ENCODE measurements at regions of chr11 and their contacts with region 1.

Region 1: DNA sequence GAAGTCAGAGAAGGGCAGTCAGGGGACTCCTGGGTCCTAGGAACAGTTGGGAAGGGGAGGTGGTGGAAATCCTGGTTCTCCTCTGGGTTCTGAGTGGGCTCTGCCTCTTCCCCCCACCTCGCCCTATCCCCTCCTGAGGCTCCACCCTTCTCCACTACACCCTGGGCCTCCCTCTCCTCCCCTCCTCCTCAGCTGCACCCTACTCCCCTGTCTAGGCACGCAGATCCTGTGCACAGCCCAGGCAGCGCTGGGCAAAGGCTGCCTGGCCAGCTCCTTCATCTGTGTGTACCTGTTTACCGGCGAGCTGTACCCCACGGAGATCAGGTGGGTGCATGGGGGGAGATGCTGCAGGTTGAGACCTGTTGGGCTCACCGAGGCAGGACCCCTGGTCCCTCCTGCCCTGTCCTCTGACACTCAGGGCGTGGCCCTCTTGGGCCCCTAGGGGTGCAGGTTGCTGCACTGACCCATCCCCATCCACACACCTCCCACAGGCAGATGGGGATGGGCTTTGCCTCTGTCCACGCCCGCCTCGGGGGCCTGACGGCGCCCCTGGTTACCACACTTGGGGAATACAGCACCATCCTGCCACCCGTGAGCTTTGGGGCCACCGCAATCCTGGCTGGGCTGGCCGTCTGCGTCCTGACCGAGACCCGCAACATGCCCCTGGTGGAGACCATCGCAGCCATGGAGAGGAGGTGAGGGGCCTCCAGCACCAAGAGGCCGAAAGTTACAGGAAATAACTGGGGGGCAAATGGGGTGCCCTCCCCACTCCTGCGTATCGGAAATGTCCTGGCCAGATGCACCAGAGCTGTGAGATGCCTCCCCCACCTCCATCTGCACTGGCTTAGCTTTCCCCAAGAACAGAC is 25.3 kb upstream of the POLA2 start:
- DNase-seq: no peak
- ATAC-seq: peak in 2 of 8 donors; percentile 39 to 55
- H3K4me3 ChIP-seq: no peak overlapping the region
- H3K27ac ChIP-seq: no peak overlapping the region
- H3K4me1 ChIP-seq: no peaks in the 10 kb centered on the region
- H3K27me3 ChIP-seq: peaks cover 0 to 1% (median 0%) of the 10 kb centered on the region in 7 donors
- CTCF ChIP-seq: no peak

Region 2: DNA sequence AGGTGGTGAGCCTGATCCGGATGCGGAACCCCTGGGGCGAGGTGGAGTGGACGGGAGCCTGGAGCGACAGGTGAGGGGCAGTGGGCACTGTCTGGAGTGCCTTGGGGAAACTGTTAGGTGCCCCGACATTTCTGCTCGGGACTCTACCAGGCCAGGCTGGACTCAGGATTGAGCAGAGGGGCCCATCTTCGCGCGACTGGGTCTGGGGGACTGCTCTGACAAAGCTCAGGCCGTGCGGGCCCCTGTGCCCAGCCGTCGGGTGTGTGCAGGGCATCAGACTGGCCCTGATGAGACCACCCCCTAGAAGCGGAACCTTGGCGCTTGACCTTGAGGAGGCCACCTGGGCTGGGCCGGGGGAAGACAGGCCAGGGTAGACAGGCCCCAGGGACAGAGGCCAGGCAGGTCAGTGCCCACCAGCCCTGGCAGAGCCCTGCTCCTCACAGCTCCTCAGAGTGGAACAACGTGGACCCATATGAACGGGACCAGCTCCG is 48.4 kb before region 1 on chr11:
- intact Hi-C with region 1: loop called in 1 of 10 experiments (anchors 2 kb)
- DNase-seq: no peak
- ATAC-seq: peak in 3 of 8 donors; percentile 8 to 27 (median 25)
- H3K4me3 ChIP-seq: no peak overlapping the region
- H3K27ac ChIP-seq: no peak overlapping the region
- H3K4me1 ChIP-seq: peaks cover 0 to 7% (median 4%) of the 10 kb centered on the region in 9 donors
- H3K27me3 ChIP-seq: no peaks in the 10 kb centered on the region
- CTCF ChIP-seq: no peak

Region 3: DNA sequence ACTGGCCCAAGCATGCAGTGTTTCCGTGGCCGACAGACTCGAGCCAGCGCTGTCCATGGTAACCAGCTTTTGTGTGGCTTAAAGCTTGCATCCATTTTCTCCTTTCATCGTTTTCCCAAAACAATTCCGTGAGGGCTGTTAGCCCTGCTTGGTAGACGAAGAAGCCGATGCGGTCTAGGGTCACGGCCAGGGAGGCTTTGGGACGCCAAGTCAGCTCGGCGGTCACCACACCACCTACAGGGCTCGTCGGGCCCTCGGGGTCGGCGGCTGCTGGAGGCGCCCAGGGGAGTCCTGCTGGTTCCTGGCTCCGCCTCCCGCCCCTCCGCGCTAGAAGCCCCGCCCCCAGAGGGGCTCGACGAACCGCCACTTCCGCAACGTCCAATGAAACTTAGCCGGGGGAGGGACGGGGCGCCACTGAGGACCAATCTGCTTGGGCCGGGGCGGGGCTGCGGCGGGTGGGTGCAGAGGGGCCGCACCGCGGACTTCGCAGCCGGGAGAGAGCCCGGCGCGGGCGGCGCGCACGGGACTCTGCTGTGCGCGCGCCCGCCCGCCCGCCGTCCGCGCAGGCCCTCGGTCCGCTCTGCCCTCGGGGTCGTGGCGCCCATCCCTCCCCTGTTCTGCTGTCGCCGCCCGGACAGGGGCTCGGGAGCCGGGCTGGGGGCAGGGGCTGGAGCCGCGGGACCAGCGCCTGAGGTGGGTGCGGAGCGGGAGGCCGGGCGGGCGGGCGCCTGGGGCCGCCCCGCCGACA is 118.0 kb after region 1 on chr11 and contains the start of gene TIGD3:
- intact Hi-C with region 1: no loop called
- DNase-seq: peak; percentile 98
- ATAC-seq: peak; percentile 85 to 97 (median 94)
- H3K4me3 ChIP-seq: peak within 1 kb of the TSS; percentile 49 to 83 (median 72)
- H3K27ac ChIP-seq: peak within 1 kb of the TSS in 9 of 10 donors; percentile 10 to 71 (median 55)
- H3K4me1 ChIP-seq: peaks cover 15 to 42% (median 28%) of the 10 kb centered on the region in 9 donors
- H3K27me3 ChIP-seq: peaks cover 0 to 16% (median 0%) of the 10 kb centered on the region in 7 donors
- CTCF ChIP-seq: peak in 3 of 9 donors; percentile 21 to 24 (median 21)
- total RNA-seq, gene TIGD3: 0.11 to 0.87 (median 0.33) TPM in 8 of 10 donors, not detected in the others

Region 4: DNA sequence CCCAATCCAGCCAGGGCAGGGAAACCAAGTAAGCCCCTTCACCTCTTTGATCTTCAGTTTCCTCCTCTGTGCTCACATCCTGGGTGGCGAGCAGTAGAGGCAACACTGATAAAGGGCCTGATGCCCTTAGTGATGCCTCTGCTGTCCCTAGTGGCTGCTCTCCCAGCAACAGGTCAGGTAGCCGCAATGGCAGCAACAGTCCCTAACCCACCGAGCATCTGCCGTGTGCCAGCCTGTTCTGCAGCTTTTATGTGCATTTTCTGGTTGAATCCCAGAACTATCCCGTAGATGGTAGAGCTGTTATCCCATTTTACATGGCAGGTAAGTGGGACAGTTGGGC is 293.7 kb after region 1 on chr11:
- intact Hi-C with region 1: no loop called
- DNase-seq: no peak
- ATAC-seq: no peak
- H3K4me3 ChIP-seq: no peak overlapping the region
- H3K27ac ChIP-seq: no peak overlapping the region
- H3K4me1 ChIP-seq: peaks cover 9 to 21% (median 14%) of the 10 kb centered on the region in 9 donors
- H3K27me3 ChIP-seq: no peaks in the 10 kb centered on the region
- CTCF ChIP-seq: peak in 3 of 9 donors; percentile 7 to 15 (median 10)

Measured in heart right ventricle (tissue), 16 donors.